ENCODE measurements at regions of chr15 and their contacts with region 1.

Region 1: DNA sequence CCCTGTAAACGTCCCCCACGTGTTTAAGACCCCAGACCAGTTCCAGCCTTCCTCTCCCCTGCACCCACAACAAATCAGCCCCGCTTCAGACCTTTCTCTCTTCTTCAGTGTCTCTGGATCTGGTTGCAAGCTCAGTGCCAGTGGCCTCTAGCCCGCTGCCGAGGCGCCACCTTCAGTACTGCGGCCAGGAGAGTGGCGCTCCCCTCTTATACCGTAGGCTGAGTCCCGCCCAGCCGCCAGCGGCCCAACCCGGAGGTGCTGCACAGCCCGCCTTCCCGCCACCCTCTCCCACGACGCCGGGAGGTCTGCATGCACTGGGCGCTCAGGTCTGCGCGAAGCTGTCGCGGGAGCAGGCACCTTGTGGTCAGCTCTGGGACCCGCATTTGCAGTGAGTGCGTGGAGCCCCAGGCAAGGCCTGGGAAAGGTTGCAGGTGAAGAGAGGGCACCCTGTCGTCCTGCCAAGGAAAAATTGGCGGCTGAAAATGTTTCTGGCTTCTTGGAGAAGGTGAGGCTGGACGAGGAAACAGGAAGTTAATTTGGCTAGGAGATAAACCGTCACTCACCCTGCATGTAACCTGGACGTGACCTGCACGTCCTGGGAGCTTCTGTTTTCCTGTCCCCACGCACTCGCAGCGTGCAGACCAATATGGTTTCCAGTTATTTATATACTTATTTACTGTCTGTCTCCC is at the start of gene C2CD4B:
- DNase-seq: peak; percentile 37
- H3K4me3 Mint-ChIP-seq: peak within 1 kb of the TSS; percentile 72
- H3K27ac Mint-ChIP-seq: no peak within 1 kb of the TSS
- H3K4me1 Mint-ChIP-seq: peaks cover 16% of the 10 kb centered on the region
- H3K27me3 Mint-ChIP-seq: peaks cover 64% of the 10 kb centered on the region
- total RNA-seq, gene C2CD4B: 0.20 TPM in 1 of 2 experiments, not detected in the other

Region 2: GRCh38 chr15:61736790-61737189 is 428.5 kb before region 1 on chr15:
- CTCF ChIA-PET with region 1: no interaction called
- intact Hi-C with region 1: no loop called
- DNase-seq: no peak
- H3K4me3 Mint-ChIP-seq: no peak overlapping the region
- H3K27ac Mint-ChIP-seq: no peak overlapping the region
- H3K4me1 Mint-ChIP-seq: no peaks in the 10 kb centered on the region
- H3K27me3 Mint-ChIP-seq: peaks cover 2% of the 10 kb centered on the region

Region 3: DNA sequence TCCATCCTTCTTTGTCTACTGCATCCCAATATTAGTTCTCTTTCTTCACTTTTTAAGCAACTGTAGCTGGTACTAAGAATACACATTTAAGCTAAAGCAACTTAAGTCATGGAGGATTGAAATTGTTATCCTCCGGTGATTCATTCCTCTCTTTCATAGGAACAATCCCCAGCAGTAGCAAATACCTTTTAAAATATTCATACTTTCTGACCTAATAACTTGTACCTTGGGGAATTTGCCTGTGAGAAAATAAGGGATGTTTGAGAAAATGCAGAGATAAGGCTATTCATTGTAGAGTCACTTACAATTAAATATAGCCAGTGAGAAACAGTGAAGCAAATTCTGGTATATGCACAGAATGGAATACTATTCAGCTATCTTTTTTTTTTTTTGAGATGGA is 171.0 kb before region 1 on chr15:
- CTCF ChIA-PET with region 1: no interaction called
- intact Hi-C with region 1: no loop called
- DNase-seq: no peak
- H3K4me3 Mint-ChIP-seq: no peak overlapping the region
- H3K27ac Mint-ChIP-seq: no peak overlapping the region
- H3K4me1 Mint-ChIP-seq: peaks cover 2% of the 10 kb centered on the region
- H3K27me3 Mint-ChIP-seq: no peaks in the 10 kb centered on the region

Region 4: DNA sequence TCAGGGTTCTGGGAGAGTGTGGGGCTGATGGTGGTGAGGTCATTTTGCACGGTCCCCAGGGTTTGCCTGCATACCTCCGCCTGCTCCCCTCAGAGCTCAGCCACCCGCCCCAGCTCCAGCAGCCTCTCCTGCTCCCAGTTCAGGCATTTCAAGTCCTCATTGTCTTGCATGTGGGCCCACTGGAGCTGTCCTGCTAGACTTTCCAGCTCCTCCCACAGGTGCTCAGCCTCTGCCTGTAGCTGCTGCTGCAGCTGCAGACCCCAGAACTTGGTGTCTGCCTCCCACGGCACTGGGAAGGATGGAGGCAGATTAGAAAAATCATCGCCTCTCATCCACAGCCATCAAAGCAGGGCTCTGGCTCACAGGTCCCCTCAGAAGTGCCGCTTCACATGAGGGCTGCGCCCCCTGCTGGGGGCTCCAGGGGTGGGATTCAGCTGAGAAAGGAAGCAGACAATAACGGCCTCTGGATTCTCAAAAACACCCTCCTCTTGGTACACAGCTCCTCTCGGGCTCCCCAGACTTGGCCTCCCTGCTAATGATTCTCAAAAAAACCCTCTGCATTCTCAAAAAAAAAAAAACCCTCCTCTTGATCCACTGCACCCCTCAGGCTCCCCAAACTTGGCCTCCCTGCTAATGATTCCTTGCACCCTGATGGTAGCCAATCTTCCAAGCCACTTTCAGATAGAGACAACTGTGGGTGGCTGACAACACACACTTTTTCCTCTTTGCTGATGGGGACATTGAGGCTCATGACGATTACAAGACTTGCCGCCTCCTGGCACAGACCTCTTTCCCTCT is 89.1 kb after region 1 on chr15:
- CTCF ChIA-PET with region 1: no interaction called
- intact Hi-C with region 1: loop called (anchors 5 kb)
- DNase-seq: peak; percentile 79
- H3K4me3 Mint-ChIP-seq: no peak overlapping the region
- H3K27ac Mint-ChIP-seq: no peak overlapping the region
- H3K4me1 Mint-ChIP-seq: no peaks in the 10 kb centered on the region
- H3K27me3 Mint-ChIP-seq: peaks cover 12% of the 10 kb centered on the region

Measured in activated naive CD4-positive, alpha-beta T cell treated with anti-CD3 and anti-CD28 coated beads for 36 hours (primary cell).